ENCODE measurements at regions of chr3 and their contacts with region 1.

Region 1: GRCh38 chr3:100068826-100069225 is 45.5 kb downstream of the FILIP1L start:
- DNase-seq: peak; percentile 83
- H3K4me3 ChIP-seq: no peak overlapping the region
- H3K27ac ChIP-seq: peak overlapping the region in 1 of 4 donors; percentile 15
- H3K4me1 ChIP-seq: peaks cover 0 to 41% (median 9%) of the 10 kb centered on the region in 4 donors
- H3K27me3 ChIP-seq: no peaks in the 10 kb centered on the region
- CTCF ChIP-seq: peak; percentile 65 to 77 (median 66)
- EP300 ChIP-seq: no peak
- POLR2A ChIP-seq: no peak

Region 2: DNA sequence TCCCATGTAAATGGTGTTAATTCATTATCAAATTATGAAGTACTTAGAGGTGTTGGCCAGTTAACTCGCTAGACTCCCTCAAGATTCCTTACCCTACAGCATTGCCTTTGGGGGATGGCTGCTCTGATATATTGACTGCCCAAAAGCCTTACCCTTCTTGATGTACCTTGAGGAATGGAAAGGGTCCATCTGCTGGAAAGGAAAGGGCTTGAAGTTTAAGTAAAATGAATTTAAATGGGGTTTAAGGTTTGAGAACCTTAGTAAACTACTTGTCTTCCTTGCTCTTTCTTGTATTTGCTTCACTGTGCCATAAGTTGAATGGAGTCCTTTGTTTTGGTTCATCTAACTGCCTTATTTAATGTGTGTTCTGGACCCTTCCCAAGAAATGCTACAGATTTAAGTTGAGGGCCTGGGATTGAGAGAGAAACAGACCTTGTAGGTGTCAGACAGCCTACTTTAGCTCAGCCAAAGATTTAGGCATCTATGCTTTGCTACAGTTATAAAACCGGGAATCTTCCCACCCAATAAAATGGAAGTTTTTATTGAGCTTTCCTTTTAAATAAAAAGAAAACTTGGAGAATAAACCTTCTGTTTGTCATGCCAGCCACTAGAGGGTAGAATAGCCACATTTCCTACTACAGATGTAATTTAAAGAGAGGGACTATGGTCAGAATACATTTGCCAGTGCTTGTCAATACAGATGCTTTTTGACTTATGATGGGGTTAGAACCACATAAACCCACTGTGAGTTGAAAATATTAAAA is 225.8 kb before region 1 on chr3:
- in situ Hi-C with region 1: loop called in 3 of 4 experiments (anchors 25 kb)
- intact Hi-C with region 1: no loop called
- DNase-seq: no peak
- H3K4me3 ChIP-seq: no peak overlapping the region
- H3K27ac ChIP-seq: peak overlapping the region; percentile 65 to 85 (median 78)
- H3K4me1 ChIP-seq: peaks cover 13 to 41% (median 23%) of the 10 kb centered on the region in 4 donors
- H3K27me3 ChIP-seq: no peaks in the 10 kb centered on the region
- CTCF ChIP-seq: peak; percentile 63 to 88 (median 72)
- EP300 ChIP-seq: no peak
- POLR2A ChIP-seq: no peak

Region 3: GRCh38 chr3:99866261-99866761 is 202.5 kb before region 1 on chr3:
- in situ Hi-C with region 1: loop called in 1 of 4 experiments (anchors 25 kb)
- intact Hi-C with region 1: no loop called
- DNase-seq: no peak
- H3K4me3 ChIP-seq: no peak overlapping the region
- H3K27ac ChIP-seq: peak overlapping the region; percentile 84 to 90 (median 88)
- H3K4me1 ChIP-seq: peaks cover 14 to 59% (median 34%) of the 10 kb centered on the region in 4 donors
- H3K27me3 ChIP-seq: no peaks in the 10 kb centered on the region
- CTCF ChIP-seq: no peak
- EP300 ChIP-seq: no peak
- POLR2A ChIP-seq: no peak

Region 4: GRCh38 chr3:99909714-99910494 is 158.9 kb before region 1 on chr3:
- in situ Hi-C with region 1: no loop called
- intact Hi-C with region 1: no loop called
- DNase-seq: no peak
- H3K4me3 ChIP-seq: no peak overlapping the region
- H3K27ac ChIP-seq: no peak overlapping the region
- H3K4me1 ChIP-seq: no peaks in the 10 kb centered on the region
- H3K27me3 ChIP-seq: no peaks in the 10 kb centered on the region
- CTCF ChIP-seq: no peak
- EP300 ChIP-seq: no peak
- POLR2A ChIP-seq: no peak

Region 5: GRCh38 chr3:100103558-100104441 is 35.0 kb after region 1 on chr3:
- in situ Hi-C with region 1: no loop called
- intact Hi-C with region 1: no loop called
- DNase-seq: peak; percentile 8
- H3K4me3 ChIP-seq: no peak overlapping the region
- H3K27ac ChIP-seq: peak overlapping the region; percentile 28 to 48 (median 44)
- H3K4me1 ChIP-seq: peaks cover 21 to 57% (median 30%) of the 10 kb centered on the region in 4 donors
- H3K27me3 ChIP-seq: no peaks in the 10 kb centered on the region
- CTCF ChIP-seq: no peak
- EP300 ChIP-seq: no peak
- POLR2A ChIP-seq: no peak

Region 6: DNA sequence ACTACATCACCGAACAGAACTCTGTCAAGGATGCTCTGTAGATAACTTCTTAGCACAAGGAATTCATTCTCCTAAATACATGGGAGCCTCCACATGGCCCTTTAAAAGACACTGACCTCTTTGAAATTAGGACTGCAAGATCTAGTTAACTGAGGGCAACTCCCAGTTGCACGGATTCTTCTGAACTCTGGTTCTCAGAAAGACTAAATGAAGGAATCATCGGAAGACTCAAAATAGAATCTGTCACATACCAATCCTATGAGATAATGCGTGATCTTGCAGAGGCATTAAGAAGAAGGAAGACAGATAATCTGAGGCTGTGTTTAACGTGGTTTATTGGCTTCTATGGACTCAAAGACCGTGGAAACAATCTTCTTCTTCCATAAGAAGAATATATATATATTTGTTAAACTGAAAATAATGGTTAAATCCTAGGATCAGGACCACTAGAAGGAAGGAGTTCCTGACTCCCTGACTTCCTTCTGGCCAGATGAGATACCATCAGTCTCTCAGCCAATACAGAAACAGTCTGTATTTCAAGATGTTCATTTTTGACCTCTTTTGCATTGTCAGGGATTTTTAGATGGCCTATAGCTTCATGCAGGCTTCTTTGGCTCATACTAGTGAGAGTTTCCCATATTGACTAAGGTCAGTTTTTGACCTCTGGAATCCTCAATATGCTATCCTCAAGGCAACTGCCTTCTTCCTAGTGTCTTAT is 158.0 kb after region 1 on chr3:
- in situ Hi-C with region 1: loop called in 1 of 4 experiments (anchors 25 kb)
- intact Hi-C with region 1: no loop called
- DNase-seq: no peak
- H3K4me3 ChIP-seq: no peak overlapping the region
- H3K27ac ChIP-seq: peak overlapping the region; percentile 10 to 44 (median 16)
- H3K4me1 ChIP-seq: no peaks in the 10 kb centered on the region
- H3K27me3 ChIP-seq: no peaks in the 10 kb centered on the region
- CTCF ChIP-seq: no peak
- EP300 ChIP-seq: no peak
- POLR2A ChIP-seq: no peak

Region 7: GRCh38 chr3:100245927-100246326 is 177.1 kb after region 1 on chr3:
- in situ Hi-C with region 1: loop called (anchors 5 to 25 kb)
- intact Hi-C with region 1: loop called (anchors 10 kb)
- DNase-seq: no peak
- H3K4me3 ChIP-seq: no peak overlapping the region
- H3K27ac ChIP-seq: no peak overlapping the region
- H3K4me1 ChIP-seq: no peaks in the 10 kb centered on the region
- H3K27me3 ChIP-seq: no peaks in the 10 kb centered on the region
- CTCF ChIP-seq: no peak
- EP300 ChIP-seq: no peak
- POLR2A ChIP-seq: no peak

Region 8: DNA sequence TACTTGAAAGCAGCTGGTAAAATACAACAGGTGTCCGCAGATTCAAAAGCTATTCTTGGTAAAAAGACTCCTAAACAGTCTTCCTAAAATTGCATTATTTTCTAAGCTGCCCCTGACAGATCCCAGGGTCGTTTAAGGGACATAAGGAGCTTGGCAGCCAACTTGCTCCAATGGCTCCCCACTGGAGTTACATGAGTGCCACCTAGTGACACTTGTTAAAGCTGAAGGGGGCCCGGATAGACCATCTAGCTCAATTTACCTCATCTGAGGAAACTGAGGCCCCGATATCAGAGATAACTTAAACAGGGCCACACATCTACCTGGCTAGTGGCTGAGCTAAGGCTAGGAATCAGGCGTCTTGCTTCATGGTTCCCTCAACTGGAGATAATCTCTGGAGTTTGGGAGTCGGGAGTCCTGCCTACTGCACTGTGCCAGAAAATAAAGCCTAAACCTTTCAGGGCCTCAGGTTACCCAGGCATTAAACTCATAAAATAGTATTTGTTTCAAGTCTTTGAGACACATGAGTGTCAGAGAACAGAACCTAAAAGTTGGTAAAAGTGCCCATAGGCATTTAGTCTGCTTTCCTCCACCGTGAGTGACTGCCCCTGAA is 185.4 kb after region 1 on chr3:
- in situ Hi-C with region 1: loop called (anchors 5 to 25 kb)
- intact Hi-C with region 1: loop called (anchors 10 kb)
- DNase-seq: peak; percentile 49
- H3K4me3 ChIP-seq: no peak overlapping the region
- H3K27ac ChIP-seq: peak overlapping the region; percentile 34 to 65 (median 44)
- H3K4me1 ChIP-seq: peaks cover 0 to 11% (median 6%) of the 10 kb centered on the region in 4 donors
- H3K27me3 ChIP-seq: no peaks in the 10 kb centered on the region
- CTCF ChIP-seq: peak; percentile 64 to 73 (median 69)
- EP300 ChIP-seq: no peak
- POLR2A ChIP-seq: no peak

Region 9: DNA sequence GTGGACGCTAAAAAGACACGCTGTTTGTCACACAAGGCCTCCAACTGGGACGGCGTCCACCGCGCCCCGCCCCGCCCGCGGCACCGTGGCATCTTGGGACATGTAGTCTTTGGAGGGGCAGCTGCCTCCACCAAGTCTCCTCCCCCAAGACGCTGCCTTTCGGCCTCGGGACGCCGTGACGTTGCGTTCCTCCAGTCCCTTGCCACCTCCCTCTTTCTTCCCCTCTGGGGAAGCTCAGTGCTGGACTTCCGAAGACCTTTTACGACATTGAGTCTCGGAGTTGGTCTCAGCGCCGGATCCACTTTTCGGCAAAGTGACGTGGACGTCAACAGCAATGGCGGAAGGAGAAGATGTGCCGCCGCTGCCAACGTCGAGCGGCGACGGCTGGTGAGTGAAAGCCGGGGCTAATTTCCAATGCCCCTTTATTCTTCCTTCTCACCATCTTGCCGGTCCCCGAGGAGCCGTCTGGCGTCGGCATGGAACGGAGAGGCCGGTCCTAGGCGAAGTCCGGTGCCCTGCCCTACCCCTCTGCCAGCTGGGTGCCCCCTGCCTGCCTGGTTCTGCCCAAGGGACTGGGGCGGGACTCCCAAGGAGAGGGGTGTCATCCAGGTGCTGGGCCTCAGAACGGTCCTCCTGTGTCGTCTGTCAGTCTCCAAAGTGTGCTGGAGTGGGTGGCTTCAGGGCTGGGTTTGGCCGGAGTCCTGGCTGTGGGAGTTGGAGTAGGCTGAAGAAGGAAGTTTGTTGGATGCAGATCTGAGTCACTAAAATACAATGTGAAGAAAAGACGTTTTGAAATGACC is 192.1 kb after region 1 on chr3 and contains the start of gene TBC1D23:
- in situ Hi-C with region 1: loop called in 1 of 4 experiments (anchors 25 kb)
- intact Hi-C with region 1: loop called (anchors 10 kb)
- DNase-seq: peak; percentile 98
- H3K4me3 ChIP-seq: peak within 1 kb of the TSS; percentile 71 to 87 (median 76)
- H3K27ac ChIP-seq: peak within 1 kb of the TSS; percentile 93 to 96 (median 95)
- H3K4me1 ChIP-seq: peaks cover 23 to 57% (median 28%) of the 10 kb centered on the region in 4 donors
- H3K27me3 ChIP-seq: no peaks in the 10 kb centered on the region
- CTCF ChIP-seq: peak in 1 of 5 experiments; percentile 8
- EP300 ChIP-seq: no peak
- POLR2A ChIP-seq: peak; percentile 97
- total RNA-seq, gene TBC1D23: 15.5 to 42.5 (median 34.5) TPM